SK-N-SH (cell line): ENCODE measurements at regions of chr12 and their contacts with region 1.

Region 1: GRCh38 chr12:39319187-39319586 is 123.7 kb downstream of the KIF21A start:
- DNase-seq: no peak
- H3K4me3 ChIP-seq: no peak overlapping the region
- H3K27ac ChIP-seq: peak overlapping the region in 1 of 2 experiments; percentile 56; a peak in 1 of 4 replicates
- H3K4me1 ChIP-seq: no peaks in the 10 kb centered on the region; a peak in 1 of 4 replicates
- H3K27me3 ChIP-seq: no peaks in the 10 kb centered on the region
- CTCF ChIP-seq: no peak
- EP300 ChIP-seq: no peak
- RAD21 ChIP-seq: no peak

Region 2: GRCh38 chr12:39300799-39301198 is 18.4 kb before region 1 on chr12:
- CTCF ChIA-PET with region 1: interaction called, 12 read pairs
- POLR2A ChIA-PET with region 1: no interaction called
- DNase-seq: no peak
- H3K4me3 ChIP-seq: no peak overlapping the region
- H3K27ac ChIP-seq: peak overlapping the region in 1 of 2 experiments; percentile 67; a peak in 2 of 4 replicates
- H3K4me1 ChIP-seq: peaks cover 0 to 17% of the 10 kb centered on the region in 2 experiments; a peak in 2 of 4 replicates
- H3K27me3 ChIP-seq: no peaks in the 10 kb centered on the region
- CTCF ChIP-seq: no peak
- EP300 ChIP-seq: no peak
- RAD21 ChIP-seq: no peak

Region 3: DNA sequence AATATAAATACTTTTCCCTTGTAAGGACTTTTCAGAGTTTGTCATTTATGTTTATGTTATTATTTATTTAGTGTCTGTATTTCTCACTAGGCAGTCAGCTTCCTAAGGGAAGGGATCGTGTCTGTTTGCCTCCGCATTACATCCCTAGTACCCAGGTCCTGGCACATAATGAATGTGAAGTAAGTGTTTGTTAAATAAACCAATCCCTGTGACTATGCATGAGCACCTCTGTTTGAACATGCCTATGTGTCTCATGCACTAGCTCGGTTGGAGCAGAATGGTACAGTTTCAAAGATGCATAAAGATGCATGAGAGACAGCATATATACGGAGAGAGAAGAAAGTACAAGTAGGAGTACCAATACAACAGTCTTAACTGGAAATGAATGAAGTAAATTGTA is 24.5 kb after region 1 on chr12:
- CTCF ChIA-PET with region 1: interaction called, 10 read pairs
- POLR2A ChIA-PET with region 1: no interaction called
- DNase-seq: no peak
- H3K4me3 ChIP-seq: no peak overlapping the region
- H3K27ac ChIP-seq: no peak overlapping the region
- H3K4me1 ChIP-seq: no peaks in the 10 kb centered on the region; a peak in 1 of 4 replicates
- H3K27me3 ChIP-seq: no peaks in the 10 kb centered on the region
- CTCF ChIP-seq: no peak
- EP300 ChIP-seq: no peak
- RAD21 ChIP-seq: no peak